Spleen (tissue), 13 donors: ENCODE measurements at regions of chr17 and their contacts with region 1.

Region 1: DNA sequence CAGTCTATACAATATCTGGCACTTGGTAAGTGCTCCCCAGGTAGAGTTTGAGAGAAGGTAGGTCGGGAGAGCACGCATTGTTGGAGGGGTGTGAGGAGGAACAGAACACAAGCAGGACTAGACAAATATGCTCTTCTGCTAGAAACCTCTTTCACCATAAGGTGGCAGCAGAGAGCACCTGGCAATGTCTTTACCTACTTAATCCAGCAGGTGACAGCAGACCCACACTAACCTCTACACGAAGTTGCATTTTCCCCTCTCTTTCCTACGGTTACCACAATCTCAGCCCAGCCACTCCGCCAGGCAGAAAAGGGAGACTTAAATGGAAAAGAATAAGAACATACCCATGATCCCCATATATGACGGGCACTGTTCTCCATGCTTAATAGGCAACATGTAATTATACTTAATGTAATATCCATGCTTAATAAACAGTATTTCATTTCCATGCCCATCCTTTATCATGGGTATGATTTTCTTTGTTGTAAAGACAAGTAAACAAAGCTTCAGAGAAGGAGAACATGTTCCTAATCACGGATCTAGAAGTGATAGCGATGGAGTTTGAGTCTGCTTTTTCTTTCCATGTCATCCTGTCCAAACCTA is 55.1 kb upstream of the CCL2 start:
- DNase-seq: peak; percentile 72
- H3K4me3 ChIP-seq: no peak overlapping the region
- H3K27ac ChIP-seq: no peak overlapping the region
- H3K4me1 ChIP-seq: peaks cover 0 to 18% (median 6%) of the 10 kb centered on the region in 6 donors
- H3K27me3 ChIP-seq: peaks cover 0 to 68% (median 0%) of the 10 kb centered on the region in 7 donors
- CTCF ChIP-seq: peak; percentile 94 to 100 (median 98)
- POLR2A ChIP-seq: no peak

Region 2: GRCh38 chr17:34306466-34306865 is 106.4 kb after region 1 on chr17:
- intact Hi-C with region 1: loop called (anchors 5 kb)
- DNase-seq: no peak
- H3K4me3 ChIP-seq: no peak overlapping the region
- H3K27ac ChIP-seq: no peak overlapping the region
- H3K4me1 ChIP-seq: peaks cover 0 to 23% (median 11%) of the 10 kb centered on the region in 6 donors
- H3K27me3 ChIP-seq: no peaks in the 10 kb centered on the region
- CTCF ChIP-seq: peak in 4 of 11 experiments; percentile 26 to 40 (median 34)
- POLR2A ChIP-seq: no peak

Region 3: GRCh38 chr17:34361478-34362061 is 161.5 kb after region 1 on chr17:
- intact Hi-C with region 1: loop called (anchors 2 kb)
- DNase-seq: peak; percentile 94
- H3K4me3 ChIP-seq: no peak overlapping the region
- H3K27ac ChIP-seq: no peak overlapping the region
- H3K4me1 ChIP-seq: peaks cover 0 to 24% (median 14%) of the 10 kb centered on the region in 6 donors
- H3K27me3 ChIP-seq: peaks cover 0 to 43% (median 0%) of the 10 kb centered on the region in 7 donors
- CTCF ChIP-seq: peak; percentile 85 to 99 (median 97)
- POLR2A ChIP-seq: no peak